ENCODE measurements at regions of chr6 and their contacts with region 1.

Region 1: GRCh38 chr6:2037237-2037926 is 208.0 kb downstream of the GMDS start:
- DNase-seq: peak in 1 of 14 experiments; percentile 10
- ATAC-seq: peak; percentile 60
- H3K4me3 ChIP-seq: no peak overlapping the region
- H3K4me3 Mint-ChIP-seq: peak overlapping the region; percentile 51
- H3K27ac ChIP-seq: no peak overlapping the region
- H3K27ac Mint-ChIP-seq: no peak overlapping the region
- H3K4me1 ChIP-seq: peaks cover 20% of the 10 kb centered on the region
- H3K4me1 Mint-ChIP-seq: peaks cover 46% of the 10 kb centered on the region
- H3K27me3 ChIP-seq: no peaks in the 10 kb centered on the region
- H3K27me3 Mint-ChIP-seq: no peaks in the 10 kb centered on the region
- CTCF ChIP-seq: no peak

Region 2: DNA sequence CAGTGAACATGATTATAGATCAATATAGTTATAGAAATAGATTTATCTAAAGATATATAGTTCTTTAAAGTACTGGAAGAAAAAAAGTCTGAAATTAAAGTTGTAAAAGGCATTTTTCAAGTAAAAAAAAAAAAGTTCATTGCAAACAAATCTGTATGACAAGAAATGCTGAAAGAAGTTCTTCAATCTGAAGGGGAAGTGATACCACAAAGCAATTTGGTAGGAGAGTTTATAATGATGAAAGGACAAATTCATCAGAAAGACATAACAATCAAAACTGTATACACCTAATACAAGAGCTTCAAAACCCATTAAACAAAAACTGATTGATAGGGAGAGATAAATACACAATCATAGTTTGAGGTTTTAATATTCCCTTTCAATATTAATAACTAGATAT is 1394.6 kb before region 1 on chr6:
- CTCF ChIA-PET with region 1: no interaction called
- POLR2A ChIA-PET with region 1: no interaction called
- intact Hi-C with region 1: no loop called
- DNase-seq: no peak
- ATAC-seq: no peak
- H3K4me3 ChIP-seq: no peak overlapping the region
- H3K4me3 Mint-ChIP-seq: no peak overlapping the region
- H3K27ac ChIP-seq: no peak overlapping the region
- H3K27ac Mint-ChIP-seq: no peak overlapping the region
- H3K4me1 ChIP-seq: peaks cover 3% of the 10 kb centered on the region
- H3K4me1 Mint-ChIP-seq: peaks cover 47% of the 10 kb centered on the region
- H3K27me3 ChIP-seq: no peaks in the 10 kb centered on the region
- H3K27me3 Mint-ChIP-seq: no peaks in the 10 kb centered on the region
- CTCF ChIP-seq: no peak

Region 3: DNA sequence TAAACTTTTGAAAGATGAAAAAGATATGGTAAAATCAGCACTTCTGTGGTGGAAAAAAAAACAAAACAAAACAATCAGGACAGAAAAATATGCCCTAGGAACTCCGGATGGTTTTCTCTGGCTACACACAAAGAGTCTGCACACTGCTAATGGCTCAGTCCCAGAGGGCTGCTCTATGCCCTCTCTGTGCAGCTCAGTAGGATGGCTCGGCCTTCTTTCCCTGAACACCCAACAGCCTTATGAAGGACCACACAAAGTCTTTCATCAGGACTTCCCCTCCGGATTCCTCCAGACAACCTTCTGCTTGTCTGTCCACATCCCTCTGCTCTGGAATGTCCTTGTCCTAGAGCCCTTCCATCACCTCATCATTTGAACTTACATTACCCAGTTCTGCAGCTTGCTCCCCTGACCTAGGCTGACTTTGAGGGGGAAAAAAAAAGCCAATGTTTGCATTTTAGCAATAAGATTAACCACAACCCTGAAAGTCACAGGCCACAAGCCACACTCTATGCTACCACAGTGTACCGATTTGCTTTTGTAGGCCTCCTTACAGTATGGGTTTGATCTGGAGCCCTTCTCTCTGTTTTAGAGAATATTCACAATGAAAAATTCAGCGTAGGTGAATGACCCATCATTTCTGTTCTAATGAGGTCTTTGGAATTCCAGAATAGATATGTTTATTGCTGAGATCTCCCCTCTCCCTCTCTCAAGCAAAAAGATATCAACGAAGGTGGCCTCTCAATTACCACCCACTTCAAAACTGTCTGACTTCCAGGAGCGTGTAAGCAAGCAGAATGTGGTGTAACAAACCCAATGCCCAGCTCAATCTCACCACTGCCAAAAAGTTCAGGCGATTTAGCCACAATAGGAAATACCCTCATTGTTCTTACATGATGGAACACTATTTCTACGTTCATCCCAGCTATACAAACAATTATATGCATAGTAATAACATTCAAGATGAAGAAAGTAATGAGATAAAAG is 44.1 kb after region 1 on chr6:
- CTCF ChIA-PET with region 1: no interaction called
- POLR2A ChIA-PET with region 1: no interaction called
- intact Hi-C with region 1: loop called in 1 of 2 experiments (anchors 10 kb)
- DNase-seq: peak in 1 of 14 experiments; percentile 12
- ATAC-seq: no peak
- H3K4me3 ChIP-seq: no peak overlapping the region
- H3K4me3 Mint-ChIP-seq: no peak overlapping the region
- H3K27ac ChIP-seq: no peak overlapping the region
- H3K27ac Mint-ChIP-seq: no peak overlapping the region
- H3K4me1 ChIP-seq: no peaks in the 10 kb centered on the region
- H3K4me1 Mint-ChIP-seq: peaks cover 24% of the 10 kb centered on the region
- H3K27me3 ChIP-seq: no peaks in the 10 kb centered on the region
- H3K27me3 Mint-ChIP-seq: no peaks in the 10 kb centered on the region
- CTCF ChIP-seq: no peak

Region 4: GRCh38 chr6:2305951-2306350 is 268.6 kb after region 1 on chr6:
- CTCF ChIA-PET with region 1: no interaction called
- POLR2A ChIA-PET with region 1: no interaction called
- intact Hi-C with region 1: no loop called
- DNase-seq: no peak
- ATAC-seq: no peak
- H3K4me3 ChIP-seq: no peak overlapping the region
- H3K4me3 Mint-ChIP-seq: no peak overlapping the region
- H3K27ac ChIP-seq: no peak overlapping the region
- H3K27ac Mint-ChIP-seq: no peak overlapping the region
- H3K4me1 ChIP-seq: no peaks in the 10 kb centered on the region
- H3K4me1 Mint-ChIP-seq: no peaks in the 10 kb centered on the region
- H3K27me3 ChIP-seq: no peaks in the 10 kb centered on the region
- H3K27me3 Mint-ChIP-seq: no peaks in the 10 kb centered on the region
- CTCF ChIP-seq: no peak

Measured in CD4-positive, alpha-beta T cell (primary cell).